ENCODE measurements at regions of chr18 and their contacts with region 1.

Region 1: GRCh38 chr18:70288851-70289328 is at the start of gene SOCS6:
- DNase-seq: peak; percentile 80
- ATAC-seq: peak; percentile 64
- total RNA-seq, gene SOCS6: 22.4 TPM

Region 2: GRCh38 chr18:70075906-70076305 is 213.0 kb before region 1 on chr18:
- intact Hi-C with region 1: no loop called
- DNase-seq: no peak
- ATAC-seq: no peak

Region 3: GRCh38 chr18:70205421-70206397 is 83.2 kb before region 1 on chr18 and contains the start of gene RTTN:
- intact Hi-C with region 1: loop called (anchors 5 kb)
- DNase-seq: peak; percentile 97
- ATAC-seq: peak; percentile 100
- total RNA-seq, gene RTTN: 11.1 TPM